ENCODE measurements at regions of chr3 and their contacts with region 1.

Region 1: GRCh38 chr3:170164707-170165106 is 16.8 kb downstream of the PHC3 start:
- DNase-seq: no peak
- ATAC-seq: no peak
- H3K4me3 ChIP-seq: no peak overlapping the region
- H3K4me3 Mint-ChIP-seq: peak overlapping the region; percentile 7
- H3K27ac ChIP-seq: no peak overlapping the region
- H3K27ac Mint-ChIP-seq: peak overlapping the region; percentile 81
- H3K4me1 ChIP-seq: peaks cover 40% of the 10 kb centered on the region
- H3K4me1 Mint-ChIP-seq: peaks cover 69% of the 10 kb centered on the region
- H3K27me3 ChIP-seq: no peaks in the 10 kb centered on the region
- H3K27me3 Mint-ChIP-seq: no peaks in the 10 kb centered on the region
- CTCF ChIP-seq: no peak

Region 2: GRCh38 chr3:170098753-170099152 is 66.0 kb before region 1 on chr3:
- CTCF ChIA-PET with region 1: no interaction called
- POLR2A ChIA-PET with region 1: no interaction called
- intact Hi-C with region 1: loop called in 1 of 2 experiments (anchors 5 kb)
- DNase-seq: no peak
- ATAC-seq: no peak
- H3K4me3 ChIP-seq: no peak overlapping the region
- H3K4me3 Mint-ChIP-seq: no peak overlapping the region
- H3K27ac ChIP-seq: no peak overlapping the region
- H3K27ac Mint-ChIP-seq: peak overlapping the region; percentile 49
- H3K4me1 ChIP-seq: no peaks in the 10 kb centered on the region
- H3K4me1 Mint-ChIP-seq: no peaks in the 10 kb centered on the region
- H3K27me3 ChIP-seq: no peaks in the 10 kb centered on the region
- H3K27me3 Mint-ChIP-seq: no peaks in the 10 kb centered on the region
- CTCF ChIP-seq: no peak

Region 3: DNA sequence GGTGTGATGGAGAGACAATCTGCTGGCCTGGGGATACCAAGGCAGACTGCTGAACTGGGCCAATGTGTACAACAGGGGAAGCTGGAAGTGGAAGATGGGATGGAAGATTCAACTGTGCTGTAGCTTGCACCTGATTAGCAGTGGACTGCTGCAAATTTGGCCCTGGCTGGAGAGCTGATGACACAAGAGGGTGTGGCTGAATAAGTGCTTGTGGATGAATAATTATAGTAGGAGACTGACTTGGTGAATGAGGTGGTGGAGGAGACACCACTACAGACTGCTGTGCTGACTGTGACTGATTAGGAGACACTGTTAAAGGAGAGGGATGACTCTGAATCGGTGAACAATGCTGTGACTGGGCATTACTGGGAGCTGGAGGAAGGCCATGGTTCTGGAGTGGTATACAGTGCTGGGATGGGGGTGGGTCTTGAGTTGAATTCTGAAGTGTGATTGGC is 35.7 kb before region 1 on chr3:
- CTCF ChIA-PET with region 1: no interaction called
- POLR2A ChIA-PET with region 1: no interaction called
- intact Hi-C with region 1: loop called in 1 of 2 experiments (anchors 5 kb)
- DNase-seq: peak in 2 of 14 experiments; percentile 2 to 18
- ATAC-seq: peak; percentile 21
- H3K4me3 ChIP-seq: no peak overlapping the region
- H3K4me3 Mint-ChIP-seq: peak overlapping the region; percentile 6
- H3K27ac ChIP-seq: peak overlapping the region in 1 of 2 donors; percentile 13
- H3K27ac Mint-ChIP-seq: peak overlapping the region; percentile 54
- H3K4me1 ChIP-seq: peaks cover 13% of the 10 kb centered on the region
- H3K4me1 Mint-ChIP-seq: peaks cover 49% of the 10 kb centered on the region
- H3K27me3 ChIP-seq: no peaks in the 10 kb centered on the region
- H3K27me3 Mint-ChIP-seq: no peaks in the 10 kb centered on the region
- CTCF ChIP-seq: no peak